ENCODE measurements at regions of chr9 and their contacts with region 1.

Region 1: GRCh38 chr9:70120834-70121510 is 77.3 kb downstream of the MAMDC2 start:
- H3K4me3 ChIP-seq: no peak overlapping the region
- H3K27ac ChIP-seq: no peak overlapping the region
- H3K4me1 ChIP-seq: no peaks in the 10 kb centered on the region
- CTCF ChIP-seq: no peak

Region 2: GRCh38 chr9:70080481-70081119 is 40.4 kb before region 1 on chr9:
- CTCF ChIA-PET with region 1: no interaction called
- POLR2A ChIA-PET with region 1: no interaction called
- H3K4me3 ChIP-seq: no peak overlapping the region
- H3K27ac ChIP-seq: no peak overlapping the region
- H3K4me1 ChIP-seq: peaks cover 7% of the 10 kb centered on the region; the same call in 1 of the 2 replicates
- CTCF ChIP-seq: no peak

Region 3: GRCh38 chr9:70229579-70229978 is 108.6 kb after region 1 on chr9:
- CTCF ChIA-PET with region 1: interaction called, 10 read pairs
- POLR2A ChIA-PET with region 1: no interaction called
- H3K4me3 ChIP-seq: no peak overlapping the region
- H3K27ac ChIP-seq: no peak overlapping the region
- H3K4me1 ChIP-seq: no peaks in the 10 kb centered on the region
- CTCF ChIP-seq: no peak

Measured in HEK293 (cell line).